ENCODE measurements at regions of chr3 and their contacts with region 1.

Region 1: DNA sequence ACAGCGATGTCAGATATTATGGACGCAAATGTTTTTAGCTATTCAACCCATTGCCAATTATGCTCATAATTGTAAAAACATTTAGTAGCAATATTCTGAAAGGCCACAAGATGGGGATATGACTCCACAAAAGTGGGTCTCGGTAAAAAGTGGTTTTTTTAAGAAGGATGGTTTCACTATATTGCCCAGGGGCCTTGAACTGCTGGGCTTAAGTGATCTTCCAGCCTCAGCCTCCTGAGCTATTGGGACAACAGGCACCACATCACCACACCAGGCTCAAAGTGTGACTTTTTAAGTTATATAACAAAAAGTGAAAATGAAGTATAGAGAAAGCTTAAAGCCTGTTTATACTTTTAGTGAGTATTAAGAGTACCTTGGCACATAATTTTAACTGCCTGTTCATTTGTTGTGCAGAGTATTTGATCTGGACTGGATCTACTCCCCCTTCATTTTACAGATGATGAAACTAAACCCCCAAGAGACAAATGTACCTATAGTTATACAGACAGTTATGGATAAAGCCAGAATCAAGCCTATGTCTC is 9.4 kb downstream of the NAA50 start:
- DNase-seq: peak in 6 of 14 experiments; percentile 5 to 83 (median 53)
- ATAC-seq: peak; percentile 90
- H3K4me3 ChIP-seq: no peak overlapping the region
- H3K4me3 Mint-ChIP-seq: no peak overlapping the region
- H3K27ac ChIP-seq: peak overlapping the region in 1 of 2 donors; percentile 52
- H3K27ac Mint-ChIP-seq: peak overlapping the region; percentile 53
- H3K4me1 ChIP-seq: peaks cover 3% of the 10 kb centered on the region
- H3K4me1 Mint-ChIP-seq: peaks cover 83% of the 10 kb centered on the region
- H3K27me3 ChIP-seq: no peaks in the 10 kb centered on the region
- H3K27me3 Mint-ChIP-seq: no peaks in the 10 kb centered on the region
- CTCF ChIP-seq: peak; percentile 82

Region 2: GRCh38 chr3:113696658-113697499 is 39.7 kb before region 1 on chr3:
- CTCF ChIA-PET with region 1: interaction called, 8 read pairs
- POLR2A ChIA-PET with region 1: interaction called, 10 read pairs
- intact Hi-C with region 1: no loop called
- DNase-seq: peak; percentile 96 to 100 (median 98)
- ATAC-seq: peak; percentile 87
- H3K4me3 ChIP-seq: peak overlapping the region; percentile 78
- H3K4me3 Mint-ChIP-seq: no peak overlapping the region
- H3K27ac ChIP-seq: peak overlapping the region; percentile 87
- H3K27ac Mint-ChIP-seq: no peak overlapping the region
- H3K4me1 ChIP-seq: peaks cover 23% of the 10 kb centered on the region
- H3K4me1 Mint-ChIP-seq: peaks cover 23% of the 10 kb centered on the region
- H3K27me3 ChIP-seq: no peaks in the 10 kb centered on the region
- H3K27me3 Mint-ChIP-seq: no peaks in the 10 kb centered on the region
- CTCF ChIP-seq: no peak

Region 3: DNA sequence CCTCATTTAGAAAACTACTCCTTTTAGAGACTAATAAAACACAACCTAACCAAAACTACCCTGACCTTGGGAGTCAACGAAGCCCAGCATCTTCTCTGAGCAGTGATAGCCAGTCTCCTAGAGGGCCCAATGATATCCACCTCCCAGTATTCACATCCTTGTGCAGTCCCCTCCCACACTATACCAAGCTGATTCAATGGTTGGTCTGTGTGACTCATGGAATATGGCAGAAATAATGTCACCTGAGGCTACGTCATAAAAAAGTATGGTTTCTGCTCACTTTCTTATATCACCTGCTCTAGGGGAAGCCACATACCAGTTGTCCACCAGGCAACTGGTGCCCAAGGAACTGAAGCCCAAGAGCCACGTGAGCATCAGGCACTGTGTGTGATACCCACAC is 18.8 kb before region 1 on chr3:
- CTCF ChIA-PET with region 1: interaction called, 14 read pairs
- POLR2A ChIA-PET with region 1: no interaction called
- intact Hi-C with region 1: no loop called
- DNase-seq: no peak
- ATAC-seq: no peak
- H3K4me3 ChIP-seq: no peak overlapping the region
- H3K4me3 Mint-ChIP-seq: no peak overlapping the region
- H3K27ac ChIP-seq: no peak overlapping the region
- H3K27ac Mint-ChIP-seq: no peak overlapping the region
- H3K4me1 ChIP-seq: no peaks in the 10 kb centered on the region
- H3K4me1 Mint-ChIP-seq: no peaks in the 10 kb centered on the region
- H3K27me3 ChIP-seq: no peaks in the 10 kb centered on the region
- H3K27me3 Mint-ChIP-seq: no peaks in the 10 kb centered on the region
- CTCF ChIP-seq: no peak

Region 4: GRCh38 chr3:113838631-113839209 is 102.1 kb after region 1 on chr3 and contains the start of gene GRAMD1C:
- CTCF ChIA-PET with region 1: interaction called, 4 read pairs
- POLR2A ChIA-PET with region 1: interaction called, 3 read pairs
- intact Hi-C with region 1: loop called (anchors 1 to 2 kb)
- DNase-seq: peak; percentile 74 to 94 (median 80)
- ATAC-seq: peak; percentile 99
- H3K4me3 ChIP-seq: peak within 1 kb of the TSS; percentile 56
- H3K4me3 Mint-ChIP-seq: peak within 1 kb of the TSS; percentile 74
- H3K27ac ChIP-seq: no peak within 1 kb of the TSS
- H3K27ac Mint-ChIP-seq: no peak within 1 kb of the TSS
- H3K4me1 ChIP-seq: peaks cover 8% of the 10 kb centered on the region
- H3K4me1 Mint-ChIP-seq: no peaks in the 10 kb centered on the region
- H3K27me3 ChIP-seq: no peaks in the 10 kb centered on the region
- H3K27me3 Mint-ChIP-seq: no peaks in the 10 kb centered on the region
- CTCF ChIP-seq: peak; percentile 83
- total RNA-seq, gene GRAMD1C: 0.22 to 0.55 TPM

Region 5: DNA sequence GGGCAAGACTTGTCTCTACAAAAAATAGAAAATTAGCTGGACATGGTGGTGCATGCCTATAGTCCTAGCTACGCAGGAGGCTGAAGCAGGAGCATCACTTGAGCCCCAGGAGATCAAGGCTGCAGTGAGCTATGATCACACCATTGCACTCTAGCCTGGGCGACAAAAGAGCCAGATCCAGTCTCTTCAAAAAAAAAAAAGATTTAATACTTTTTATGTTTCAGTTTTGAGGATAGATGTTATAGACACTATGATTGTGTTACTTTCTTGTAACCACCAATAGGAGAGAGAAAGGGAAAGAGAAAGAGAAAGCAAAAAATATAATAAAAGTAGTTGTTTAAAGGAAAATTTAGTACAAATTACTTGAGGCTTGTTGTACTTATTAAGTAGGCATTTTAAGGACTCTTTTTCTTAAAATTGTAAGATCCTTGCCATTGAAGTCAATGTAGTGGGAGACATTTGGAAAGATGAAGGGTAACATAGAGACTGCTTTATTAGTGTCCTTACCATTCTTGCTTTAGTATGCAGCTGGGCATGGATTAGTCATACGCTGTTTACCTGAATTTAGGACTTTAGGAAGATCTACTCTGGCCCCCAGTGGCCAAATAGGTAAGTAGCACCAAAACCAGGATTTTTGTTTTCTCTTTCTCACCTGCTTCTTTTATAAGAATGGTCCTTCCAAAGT is 176.1 kb after region 1 on chr3:
- CTCF ChIA-PET with region 1: interaction called, 9 read pairs
- POLR2A ChIA-PET with region 1: no interaction called
- intact Hi-C with region 1: loop called (anchors 2 kb)
- DNase-seq: peak in 7 of 14 experiments; percentile 12 to 71 (median 45)
- ATAC-seq: peak; percentile 96
- H3K4me3 ChIP-seq: peak overlapping the region; percentile 21
- H3K4me3 Mint-ChIP-seq: peak overlapping the region; percentile 18
- H3K27ac ChIP-seq: no peak overlapping the region
- H3K27ac Mint-ChIP-seq: peak overlapping the region; percentile 14
- H3K4me1 ChIP-seq: peaks cover 4% of the 10 kb centered on the region
- H3K4me1 Mint-ChIP-seq: peaks cover 5% of the 10 kb centered on the region
- H3K27me3 ChIP-seq: no peaks in the 10 kb centered on the region
- H3K27me3 Mint-ChIP-seq: no peaks in the 10 kb centered on the region
- CTCF ChIP-seq: peak; percentile 73

Region 6: DNA sequence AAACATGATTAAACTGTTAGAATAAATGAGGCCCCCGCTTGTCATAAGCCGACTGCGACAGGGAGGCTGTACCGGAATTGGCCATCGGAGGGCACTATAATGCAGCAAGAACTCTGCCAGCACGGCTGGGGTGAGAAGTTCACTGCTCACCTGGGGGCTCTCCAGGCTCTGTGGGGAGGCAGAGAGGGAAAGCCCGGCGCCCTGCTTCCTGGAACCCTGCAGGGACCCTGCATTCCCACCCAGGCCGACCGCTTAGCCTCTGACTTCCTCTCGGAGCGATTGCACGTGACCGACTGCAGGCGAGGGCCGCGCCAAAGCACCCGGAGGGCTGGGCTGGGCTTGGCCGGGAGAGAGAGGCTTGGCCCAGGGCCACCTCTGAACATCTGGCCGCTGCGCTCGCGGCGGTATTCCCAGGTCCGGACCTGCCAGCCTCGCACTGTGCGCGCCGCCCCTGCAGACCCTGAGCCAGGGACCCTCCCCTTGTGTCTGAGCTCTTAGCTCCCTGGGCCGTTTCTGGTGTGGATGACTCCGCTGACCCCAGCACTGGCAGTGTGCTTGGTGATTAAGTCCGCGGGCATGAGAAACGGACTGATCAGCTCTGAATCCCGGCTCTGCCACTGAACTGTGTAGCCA is 416.0 kb after region 1 on chr3:
- CTCF ChIA-PET with region 1: no interaction called
- POLR2A ChIA-PET with region 1: no interaction called
- intact Hi-C with region 1: loop called (anchors 2 to 5 kb)
- DNase-seq: peak; percentile 73 to 89 (median 83)
- ATAC-seq: peak; percentile 98
- H3K4me3 ChIP-seq: peak overlapping the region; percentile 57
- H3K4me3 Mint-ChIP-seq: peak overlapping the region; percentile 43
- H3K27ac ChIP-seq: no peak overlapping the region
- H3K27ac Mint-ChIP-seq: no peak overlapping the region
- H3K4me1 ChIP-seq: peaks cover 7% of the 10 kb centered on the region
- H3K4me1 Mint-ChIP-seq: peaks cover 5% of the 10 kb centered on the region
- H3K27me3 ChIP-seq: no peaks in the 10 kb centered on the region
- H3K27me3 Mint-ChIP-seq: no peaks in the 10 kb centered on the region
- CTCF ChIP-seq: peak; percentile 90

Region 7: DNA sequence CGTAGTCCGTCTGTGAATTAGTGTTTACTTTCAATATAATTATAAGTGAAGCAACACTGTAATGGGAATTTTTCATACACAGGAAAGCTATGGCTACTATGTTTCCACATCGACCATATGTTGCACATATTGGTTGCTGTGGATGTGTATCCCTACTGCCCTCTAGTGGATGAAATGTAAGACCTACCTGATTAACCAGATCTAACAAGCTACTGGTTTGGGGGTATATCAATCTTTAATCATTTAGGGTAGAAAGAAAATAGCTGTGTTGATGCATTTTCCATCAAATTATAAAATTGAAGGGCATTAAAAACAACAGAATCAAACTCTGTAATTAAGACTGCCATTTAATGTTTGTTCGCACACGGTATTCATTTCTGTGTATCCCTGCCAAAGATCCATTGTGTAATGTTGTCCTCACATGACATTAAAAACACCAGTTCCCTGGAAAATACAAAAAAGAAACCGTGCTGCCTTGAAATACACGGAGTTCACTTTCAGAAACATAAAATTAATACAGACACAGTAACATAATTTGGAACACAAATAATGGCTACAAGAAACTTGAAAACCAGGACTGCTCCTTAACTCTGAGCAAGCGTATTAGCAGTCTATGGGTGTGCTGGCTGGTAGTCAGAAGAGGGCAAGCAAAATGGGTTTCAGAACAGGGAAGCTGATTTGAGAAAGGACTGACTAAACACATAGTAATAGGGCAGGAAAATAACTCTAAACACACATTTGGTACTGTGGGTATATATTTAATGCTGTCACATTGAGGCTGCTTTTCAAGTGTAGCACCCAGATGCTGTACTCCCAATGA is 682.3 kb after region 1 on chr3:
- CTCF ChIA-PET with region 1: interaction called, 3 read pairs
- POLR2A ChIA-PET with region 1: no interaction called
- intact Hi-C with region 1: loop called (anchors 1 to 5 kb)
- DNase-seq: peak in 4 of 14 experiments; percentile 6 to 79 (median 78)
- ATAC-seq: peak; percentile 92
- H3K4me3 ChIP-seq: no peak overlapping the region
- H3K4me3 Mint-ChIP-seq: no peak overlapping the region
- H3K27ac ChIP-seq: no peak overlapping the region
- H3K27ac Mint-ChIP-seq: no peak overlapping the region
- H3K4me1 ChIP-seq: no peaks in the 10 kb centered on the region
- H3K4me1 Mint-ChIP-seq: peaks cover 6% of the 10 kb centered on the region
- H3K27me3 ChIP-seq: no peaks in the 10 kb centered on the region
- H3K27me3 Mint-ChIP-seq: no peaks in the 10 kb centered on the region
- CTCF ChIP-seq: peak; percentile 86

Measured in CD4-positive, alpha-beta T cell (primary cell).